A549 (cell line): ENCODE measurements at regions of chr17 and their contacts with region 1.

Region 1: DNA sequence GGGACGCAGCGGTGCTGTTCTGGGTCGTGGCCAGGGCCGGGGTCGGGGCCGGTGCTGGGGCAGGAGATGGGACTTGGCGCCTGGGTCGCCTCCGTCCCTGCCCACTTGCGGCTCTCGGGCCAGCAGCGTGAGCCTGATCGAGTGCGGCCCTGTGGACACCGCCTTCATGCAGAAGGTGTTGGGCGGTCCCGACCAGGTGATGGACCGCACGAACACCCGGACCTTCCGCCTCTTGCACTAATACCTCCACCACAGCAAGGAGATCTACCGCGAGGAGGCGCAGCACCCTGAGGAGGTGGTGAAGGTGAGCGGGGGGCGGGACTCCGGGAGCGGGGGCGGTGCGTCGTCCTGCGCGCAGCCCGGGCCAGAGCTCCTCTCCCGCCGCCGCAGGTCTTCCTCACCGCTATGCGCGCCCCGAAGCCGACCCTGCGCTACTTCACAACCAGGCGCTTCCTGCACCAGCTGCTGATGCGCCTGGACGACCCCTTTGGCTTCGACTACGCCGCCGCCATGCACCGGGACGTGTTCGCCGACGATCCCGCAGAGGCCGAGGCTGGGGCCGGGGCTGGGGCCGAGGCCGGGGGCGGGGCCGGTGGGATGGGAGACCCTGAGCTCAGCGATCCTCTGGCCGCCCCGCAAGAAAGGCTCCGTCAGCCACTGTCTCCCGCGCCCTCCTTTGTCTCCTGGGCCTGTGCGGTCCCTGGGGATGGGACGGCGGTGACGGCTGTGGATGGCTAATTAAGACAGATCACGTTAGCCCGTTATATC is 4.5 kb upstream of the HSD17B1 start:
- DNase-seq: peak; percentile 90 to 96
- ATAC-seq: peak; percentile 77 to 92
- H3K4me3 ChIP-seq: peak overlapping the region; percentile 51
- H3K27ac ChIP-seq: peak overlapping the region; percentile 67 to 83
- H3K4me1 ChIP-seq: peaks cover 12% of the 10 kb centered on the region; the same call in 2 of the 3 replicates
- CTCF ChIP-seq: peak; percentile 78
- EP300 ChIP-seq: no peak
- POLR2A ChIP-seq: peak; percentile 56
- RAD21 ChIP-seq: peak; percentile 57 to 62; a peak in 4 of 5 replicates

Region 2: GRCh38 chr17:42287926-42288802 is 260.1 kb before region 1 on chr17 and contains the start of gene STAT5A:
- CTCF ChIA-PET with region 1: no interaction called
- POLR2A ChIA-PET with region 1: no interaction called
- DNase-seq: peak; percentile 73 to 83
- ATAC-seq: peak; percentile 81 to 86
- H3K4me3 ChIP-seq: peak within 1 kb of the TSS; percentile 62
- H3K27ac ChIP-seq: peak within 1 kb of the TSS; percentile 79 to 92
- H3K4me1 ChIP-seq: peaks cover 12% of the 10 kb centered on the region
- CTCF ChIP-seq: no peak
- EP300 ChIP-seq: no peak
- POLR2A ChIP-seq: no peak; the same call in 1 of the 2 replicates
- RAD21 ChIP-seq: 0 out of 5 replicates have a peak, but pooled peaks of 1 of the 2 experiments have one; percentile 13
- polyA plus RNA-seq, gene STAT5A: 2.2 and 3.1 TPM in 2 replicates

Region 3: DNA sequence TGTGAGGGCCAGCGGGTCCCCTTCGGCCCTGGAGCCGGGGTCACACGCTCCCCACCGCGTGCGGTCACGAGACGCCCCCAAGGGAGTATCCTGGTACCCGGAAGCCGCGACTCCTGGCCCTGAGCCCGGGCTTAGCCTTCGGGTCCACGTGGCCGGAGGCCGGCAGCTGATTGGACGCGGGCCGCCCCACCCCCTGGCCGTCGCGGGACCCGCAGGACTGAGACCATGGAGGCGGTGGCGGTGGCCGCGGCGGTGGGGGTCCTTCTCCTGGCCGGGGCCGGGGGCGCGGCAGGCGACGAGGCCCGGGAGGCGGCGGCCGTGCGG is 12.2 kb before region 1 on chr17 and contains the start of gene NAGLU:
- CTCF ChIA-PET with region 1: interaction called, 37 read pairs
- POLR2A ChIA-PET with region 1: interaction called, 22 read pairs
- DNase-seq: peak; percentile 91 to 100
- ATAC-seq: peak; percentile 88 to 89
- H3K4me3 ChIP-seq: peak within 1 kb of the TSS; percentile 82
- H3K27ac ChIP-seq: peak within 1 kb of the TSS; percentile 93 to 97
- H3K4me1 ChIP-seq: peaks cover 31% of the 10 kb centered on the region
- CTCF ChIP-seq: no peak
- EP300 ChIP-seq: no peak
- POLR2A ChIP-seq: peak; percentile 54
- RAD21 ChIP-seq: no peak
- polyA plus RNA-seq, gene NAGLU: 17.8 and 18.0 TPM in 2 replicates

Region 4: GRCh38 chr17:42566883-42567573 is 18.8 kb after region 1 on chr17 and contains the start of gene MLX:
- CTCF ChIA-PET with region 1: interaction called, 13 read pairs
- POLR2A ChIA-PET with region 1: interaction called, 3 read pairs
- DNase-seq: peak; percentile 94 to 100
- ATAC-seq: peak; percentile 52 to 74
- H3K4me3 ChIP-seq: peak within 1 kb of the TSS; percentile 93
- H3K27ac ChIP-seq: peak within 1 kb of the TSS; percentile 96
- H3K4me1 ChIP-seq: peaks cover 32% of the 10 kb centered on the region
- CTCF ChIP-seq: no peak
- EP300 ChIP-seq: no peak
- POLR2A ChIP-seq: peak; percentile 42
- RAD21 ChIP-seq: no peak; a peak in 1 of 5 replicates
- polyA plus RNA-seq, gene MLX: 48.0 and 48.6 TPM in 2 replicates